Activated CD4-positive, alpha-beta T cell treated with anti-CD3 and anti-CD28 coated beads, Interleukin-2, amount 10 ng/mL, durations not matched to agents 24 days and 14 days (primary cell): ENCODE measurements at regions of chr6 and their contacts with region 1.

Region 1: DNA sequence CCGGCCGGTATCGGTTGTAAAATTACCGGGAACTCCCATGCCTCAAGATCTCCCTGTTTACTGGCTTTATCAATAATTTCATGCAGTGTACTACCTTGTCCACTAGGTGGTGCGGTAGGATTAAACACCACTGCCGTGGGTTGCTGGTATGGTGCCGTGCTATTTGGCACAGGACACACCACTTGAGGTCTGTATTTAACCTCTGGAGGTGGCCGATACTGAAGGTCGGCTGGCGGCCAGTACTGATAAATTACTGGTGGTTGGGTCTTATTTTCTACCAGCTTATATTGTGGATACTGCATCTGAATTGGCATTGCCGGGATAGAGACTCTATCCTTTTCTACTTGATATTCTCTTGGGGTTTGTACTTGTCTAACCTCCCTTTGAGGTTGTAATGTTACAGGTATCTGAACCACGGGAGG is 14.3 kb upstream of the PTCRA start:
- DNase-seq: peak; percentile 93
- H3K4me3 Mint-ChIP-seq: peak overlapping the region; percentile 4
- H3K27ac Mint-ChIP-seq: no peak overlapping the region
- H3K4me1 Mint-ChIP-seq: peaks cover 17% of the 10 kb centered on the region
- H3K27me3 Mint-ChIP-seq: peaks cover 2% of the 10 kb centered on the region

Region 2: DNA sequence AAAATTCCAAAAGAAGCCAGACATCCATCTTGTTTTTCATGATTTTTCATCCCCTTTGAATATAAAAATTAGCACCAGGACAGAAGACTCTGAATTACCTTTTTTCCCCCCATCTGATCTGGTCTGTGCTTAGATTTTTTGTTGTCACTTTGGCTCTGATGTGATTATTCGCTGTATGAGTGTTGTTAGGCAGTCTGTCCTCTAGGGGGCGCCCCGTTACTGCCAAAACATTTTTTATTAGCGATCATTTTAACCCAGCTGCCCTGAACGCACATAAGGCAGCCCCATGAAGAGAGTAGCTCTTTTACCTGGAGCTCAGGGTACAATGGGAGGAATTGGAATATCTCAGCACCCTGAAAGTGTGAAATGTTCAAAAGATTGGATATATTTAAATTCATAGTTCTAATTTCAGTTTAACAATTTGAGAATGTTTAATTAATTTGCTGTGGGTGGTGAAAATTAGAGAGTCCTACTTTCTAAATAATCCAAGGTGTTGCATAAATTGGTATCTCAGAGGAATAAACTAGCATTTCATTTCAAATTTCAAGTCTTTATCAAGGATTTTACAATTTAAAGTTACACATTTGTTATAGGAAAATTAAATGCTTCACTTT is 239.9 kb before region 1 on chr6:
- intact Hi-C with region 1: loop called (anchors 1 kb)
- DNase-seq: peak; percentile 94
- H3K4me3 Mint-ChIP-seq: no peak overlapping the region
- H3K27ac Mint-ChIP-seq: no peak overlapping the region
- H3K4me1 Mint-ChIP-seq: no peaks in the 10 kb centered on the region
- H3K27me3 Mint-ChIP-seq: no peaks in the 10 kb centered on the region

Region 3: GRCh38 chr6:42963855-42964605 is 62.5 kb after region 1 on chr6:
- intact Hi-C with region 1: no loop called
- DNase-seq: peak; percentile 80
- H3K4me3 Mint-ChIP-seq: no peak overlapping the region
- H3K27ac Mint-ChIP-seq: no peak overlapping the region
- H3K4me1 Mint-ChIP-seq: peaks cover 9% of the 10 kb centered on the region
- H3K27me3 Mint-ChIP-seq: peaks cover 9% of the 10 kb centered on the region

Region 4: GRCh38 chr6:43059168-43060033 is 157.9 kb after region 1 on chr6 and contains the starts of genes KLC4 and MRPL2:
- intact Hi-C with region 1: loop called (anchors 1 kb)
- DNase-seq: peak; percentile 99
- H3K4me3 Mint-ChIP-seq: peak within 1 kb of the TSS; percentile 99
- H3K27ac Mint-ChIP-seq: peak within 1 kb of the TSS; percentile 98
- H3K4me1 Mint-ChIP-seq: peaks cover 35% of the 10 kb centered on the region
- H3K27me3 Mint-ChIP-seq: no peaks in the 10 kb centered on the region
- total RNA-seq, gene KLC4: 9.5 and 10.7 TPM in 2 replicates
- total RNA-seq, gene MRPL2: 83.8 and 103 TPM in 2 replicates

Region 5: DNA sequence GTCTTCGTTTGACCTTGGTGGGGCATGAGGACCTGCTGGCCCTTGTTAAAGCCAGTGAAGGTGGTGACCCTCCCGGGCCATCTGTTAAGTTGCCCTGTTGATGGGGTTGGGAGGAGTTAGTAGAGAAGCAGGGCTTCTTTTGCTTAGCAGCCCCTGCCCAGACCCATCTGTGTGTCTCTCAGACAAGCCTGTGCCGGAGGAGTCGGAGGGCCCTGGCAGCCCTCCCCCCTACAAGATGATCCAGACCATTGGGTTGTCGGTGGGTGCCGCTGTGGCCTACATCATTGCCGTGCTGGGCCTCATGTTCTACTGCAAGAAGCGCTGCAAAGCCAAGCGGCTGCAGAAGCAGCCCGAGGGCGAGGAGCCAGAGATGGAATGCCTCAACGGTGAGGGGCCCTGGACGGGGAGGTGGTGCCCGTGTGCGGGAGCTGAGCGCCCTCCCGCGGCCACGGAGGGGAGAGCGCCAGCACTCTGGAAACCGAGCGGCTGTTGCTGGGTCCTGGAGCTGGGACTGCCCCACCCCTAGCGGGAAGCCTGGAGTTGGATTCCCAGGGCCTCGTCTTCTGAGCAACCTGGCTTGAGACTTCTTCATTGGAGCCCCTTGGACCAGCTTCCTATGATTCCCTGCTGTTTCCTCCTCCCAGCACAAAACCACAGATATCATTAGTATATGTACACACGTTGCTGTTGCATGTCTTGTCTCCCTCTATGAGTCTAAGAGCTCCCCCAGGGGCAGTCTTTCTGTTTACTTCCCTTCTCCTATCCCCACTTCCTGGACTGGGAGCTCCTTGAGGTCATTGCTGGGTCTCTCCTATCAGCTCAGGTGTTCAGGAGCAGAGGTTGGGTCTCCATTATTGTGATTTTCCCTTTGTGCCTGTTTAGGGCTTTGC is 241.9 kb after region 1 on chr6:
- intact Hi-C with region 1: loop called (anchors 1 kb)
- DNase-seq: peak; percentile 94
- H3K4me3 Mint-ChIP-seq: peak overlapping the region; percentile 24
- H3K27ac Mint-ChIP-seq: peak overlapping the region; percentile 78
- H3K4me1 Mint-ChIP-seq: peaks cover 11% of the 10 kb centered on the region
- H3K27me3 Mint-ChIP-seq: peaks cover 4% of the 10 kb centered on the region